ENCODE measurements at regions of chr13 and their contacts with region 1.

Region 1: GRCh38 chr13:27283906-27284493 is 13.4 kb downstream of the RASL11A start:
- DNase-seq: no peak
- H3K4me3 Mint-ChIP-seq: no peak overlapping the region
- H3K27ac Mint-ChIP-seq: no peak overlapping the region
- H3K4me1 Mint-ChIP-seq: no peaks in the 10 kb centered on the region
- H3K27me3 Mint-ChIP-seq: no peaks in the 10 kb centered on the region

Region 2: DNA sequence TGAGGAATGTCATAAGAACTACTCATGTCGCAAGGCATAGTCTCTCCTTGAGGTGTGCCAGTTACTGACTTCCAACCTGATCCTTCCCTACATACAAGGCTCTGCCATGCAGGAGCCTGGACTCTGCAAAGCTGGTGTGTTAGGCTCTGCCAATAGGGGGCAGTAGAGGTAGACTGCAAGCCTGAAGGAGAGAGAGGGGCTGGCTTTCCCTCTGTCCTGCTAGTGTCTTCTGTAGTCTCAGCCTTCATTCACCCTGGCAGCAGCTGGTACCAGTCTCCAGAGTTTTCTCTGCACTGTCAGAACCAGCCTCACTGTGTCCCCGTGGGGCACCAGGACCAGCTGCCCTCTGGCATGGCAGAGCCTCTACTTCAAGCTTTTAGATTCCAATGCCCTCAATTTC is 1246.7 kb before region 1 on chr13:
- intact Hi-C with region 1: no loop called
- DNase-seq: no peak
- H3K4me3 Mint-ChIP-seq: no peak overlapping the region
- H3K27ac Mint-ChIP-seq: no peak overlapping the region
- H3K4me1 Mint-ChIP-seq: no peaks in the 10 kb centered on the region
- H3K27me3 Mint-ChIP-seq: peaks cover 26% of the 10 kb centered on the region

Region 3: GRCh38 chr13:26743971-26744370 is 540.0 kb before region 1 on chr13:
- intact Hi-C with region 1: no loop called
- DNase-seq: no peak
- H3K4me3 Mint-ChIP-seq: no peak overlapping the region
- H3K27ac Mint-ChIP-seq: no peak overlapping the region
- H3K4me1 Mint-ChIP-seq: no peaks in the 10 kb centered on the region
- H3K27me3 Mint-ChIP-seq: peaks cover 10% of the 10 kb centered on the region

Region 4: DNA sequence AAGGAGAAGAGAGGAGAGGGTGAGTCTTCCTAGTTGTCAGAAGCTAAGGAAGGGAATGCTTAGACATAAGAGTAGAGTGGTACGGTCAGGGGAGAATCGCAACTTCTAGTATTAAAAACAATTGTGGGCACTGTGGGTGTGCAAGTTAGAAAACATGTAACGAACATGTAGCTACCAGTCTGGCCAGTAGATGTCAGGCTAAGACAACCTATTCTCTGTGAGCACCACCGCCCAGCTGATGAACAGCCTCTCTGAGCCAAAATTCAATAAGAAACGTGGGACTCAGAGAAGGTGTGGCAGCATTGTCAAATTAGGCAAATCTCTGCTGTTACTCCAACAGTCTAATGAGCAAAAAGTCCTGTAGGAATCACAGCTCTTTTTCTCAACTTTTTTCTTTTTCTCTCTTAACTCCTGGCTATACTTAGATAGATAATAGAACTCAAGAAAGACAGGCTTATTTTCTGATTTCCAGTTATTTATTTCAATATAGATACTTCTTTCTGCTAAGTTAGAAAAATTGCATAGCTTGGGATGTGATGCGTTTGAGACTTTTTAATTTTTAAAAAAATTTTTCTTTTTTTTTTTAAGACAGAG is 298.6 kb before region 1 on chr13:
- intact Hi-C with region 1: loop called (anchors 5 kb)
- DNase-seq: peak; percentile 53
- H3K4me3 Mint-ChIP-seq: no peak overlapping the region
- H3K27ac Mint-ChIP-seq: no peak overlapping the region
- H3K4me1 Mint-ChIP-seq: peaks cover 9% of the 10 kb centered on the region
- H3K27me3 Mint-ChIP-seq: peaks cover 8% of the 10 kb centered on the region

Measured in activated T-helper 2 cell treated with anti-CD3 and anti-CD28 coated beads, Interferon-gamma antibody, Interleukin-2, Interleukin-4, amounts not matched to agents 10 μg/mL and 5 μg/mL and 100 μg/mL, durations not matched to agents 14 hours and 24 hours and 36 hours (primary cell).